ENCODE measurements at regions of chr11 and their contacts with region 1.

Region 1: GRCh38 chr11:7986768-7987559 is at the start of gene EIF3F:
- DNase-seq: peak; percentile 75 to 96 (median 91)
- H3K4me3 ChIP-seq: peak within 1 kb of the TSS; percentile 57 to 97 (median 83)
- H3K27ac ChIP-seq: peak within 1 kb of the TSS in 55 of 59 donors; percentile 9 to 89 (median 74)
- H3K27me3 ChIP-seq: no peaks in the 10 kb centered on the region
- CTCF ChIP-seq: peak; percentile 75 to 96 (median 90)
- total RNA-seq, gene EIF3F: 85.3 to 147 (median 108) TPM

Region 2: GRCh38 chr11:7892840-7893254 is 94.1 kb before region 1 on chr11:
- intact Hi-C with region 1: loop called (anchors 1 to 5 kb)
- DNase-seq: no peak
- H3K4me3 ChIP-seq: no peak overlapping the region
- H3K27ac ChIP-seq: peak overlapping the region in 1 of 59 donors; percentile 46
- H3K27me3 ChIP-seq: no peaks in the 10 kb centered on the region
- CTCF ChIP-seq: peak; percentile 41 to 86 (median 72)